RWPE1 (cell line): ENCODE measurements at regions of chr7 and their contacts with region 1.

Region 1: DNA sequence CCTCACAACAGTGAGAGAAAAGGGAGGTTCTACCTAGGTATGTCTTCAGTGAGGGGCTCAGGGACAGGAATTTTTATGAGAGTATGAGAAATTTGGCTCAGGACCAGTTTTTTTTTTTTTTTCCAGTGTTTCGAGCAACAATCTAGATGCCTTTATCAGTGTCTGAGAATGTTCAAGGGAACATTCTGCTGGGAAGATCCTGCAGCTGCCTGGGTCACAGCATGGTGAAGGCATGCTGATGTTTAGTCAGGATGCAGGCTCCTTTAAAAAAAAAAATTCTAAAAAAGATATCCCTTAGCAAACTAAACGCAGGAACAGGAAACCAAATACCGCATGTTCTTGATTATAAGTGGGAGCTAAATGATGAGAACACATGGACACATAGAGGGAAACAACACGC is 31.0 kb downstream of the SBDS start:
- DNase-seq: no peak
- H3K27ac ChIP-seq: no peak overlapping the region
- CTCF ChIP-seq: no peak

Region 2: DNA sequence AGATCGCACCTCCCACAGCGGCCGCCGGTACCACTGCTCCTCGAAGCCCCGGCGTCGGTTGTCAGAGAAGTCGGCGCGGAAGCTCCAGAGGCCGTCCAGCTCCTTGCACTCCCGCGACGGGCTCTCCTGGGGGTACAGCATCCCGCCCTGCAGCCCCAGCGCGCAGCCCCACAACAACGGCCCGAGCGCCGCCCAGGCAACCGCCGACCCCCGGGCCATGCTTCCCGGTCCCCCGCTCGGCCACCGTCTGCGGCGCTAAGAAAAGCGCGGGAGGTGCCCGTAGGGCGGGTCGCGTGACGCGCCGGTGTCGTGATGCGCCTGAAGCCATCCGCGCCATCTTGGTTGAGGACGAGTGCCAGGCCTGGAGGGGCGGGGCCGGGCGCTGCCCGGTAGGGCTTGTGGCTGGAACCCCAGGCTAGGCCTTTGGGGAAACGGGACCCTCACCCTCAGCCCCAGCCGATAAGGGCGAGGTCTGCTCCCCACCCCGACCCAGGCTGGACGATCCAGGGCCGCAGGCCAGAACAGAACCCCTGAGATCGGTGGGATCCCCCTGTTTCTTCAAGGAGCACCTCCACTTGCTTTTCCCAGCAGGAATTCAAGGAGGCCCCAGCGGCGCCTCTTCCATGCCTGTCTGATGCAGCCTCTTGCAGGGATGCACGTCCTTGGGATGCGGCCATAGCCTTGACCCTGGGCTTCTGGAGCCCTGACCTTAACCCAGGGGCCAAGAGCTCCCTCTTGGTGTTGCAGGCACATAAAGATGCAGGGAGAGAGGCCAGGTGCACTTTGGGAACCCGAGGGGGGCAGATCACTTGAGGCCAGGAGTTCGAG is 982.2 kb before region 1 on chr7 and contains the start of gene GUSB:
- CTCF ChIA-PET with region 1: no interaction called
- POLR2A ChIA-PET with region 1: interaction called, 12 read pairs
- DNase-seq: peak; percentile 88
- H3K27ac ChIP-seq: peak within 1 kb of the TSS; percentile 80
- CTCF ChIP-seq: no peak